Activated B cell treated with CpG ODN at 0.5 μM for 24 hours (primary cell): ENCODE measurements at regions of chr19 and their contacts with region 1.

Region 1: GRCh38 chr19:11203194-11204075 is 6.1 kb upstream of the KANK2 start:
- DNase-seq: peak; percentile 38
- ATAC-seq: peak; percentile 69
- H3K4me3 Mint-ChIP-seq: no peak overlapping the region
- H3K27ac Mint-ChIP-seq: no peak overlapping the region
- H3K4me1 Mint-ChIP-seq: peaks cover 14% of the 10 kb centered on the region
- H3K27me3 Mint-ChIP-seq: peaks cover 3% of the 10 kb centered on the region
- CTCF ChIP-seq: peak; percentile 52

Region 2: DNA sequence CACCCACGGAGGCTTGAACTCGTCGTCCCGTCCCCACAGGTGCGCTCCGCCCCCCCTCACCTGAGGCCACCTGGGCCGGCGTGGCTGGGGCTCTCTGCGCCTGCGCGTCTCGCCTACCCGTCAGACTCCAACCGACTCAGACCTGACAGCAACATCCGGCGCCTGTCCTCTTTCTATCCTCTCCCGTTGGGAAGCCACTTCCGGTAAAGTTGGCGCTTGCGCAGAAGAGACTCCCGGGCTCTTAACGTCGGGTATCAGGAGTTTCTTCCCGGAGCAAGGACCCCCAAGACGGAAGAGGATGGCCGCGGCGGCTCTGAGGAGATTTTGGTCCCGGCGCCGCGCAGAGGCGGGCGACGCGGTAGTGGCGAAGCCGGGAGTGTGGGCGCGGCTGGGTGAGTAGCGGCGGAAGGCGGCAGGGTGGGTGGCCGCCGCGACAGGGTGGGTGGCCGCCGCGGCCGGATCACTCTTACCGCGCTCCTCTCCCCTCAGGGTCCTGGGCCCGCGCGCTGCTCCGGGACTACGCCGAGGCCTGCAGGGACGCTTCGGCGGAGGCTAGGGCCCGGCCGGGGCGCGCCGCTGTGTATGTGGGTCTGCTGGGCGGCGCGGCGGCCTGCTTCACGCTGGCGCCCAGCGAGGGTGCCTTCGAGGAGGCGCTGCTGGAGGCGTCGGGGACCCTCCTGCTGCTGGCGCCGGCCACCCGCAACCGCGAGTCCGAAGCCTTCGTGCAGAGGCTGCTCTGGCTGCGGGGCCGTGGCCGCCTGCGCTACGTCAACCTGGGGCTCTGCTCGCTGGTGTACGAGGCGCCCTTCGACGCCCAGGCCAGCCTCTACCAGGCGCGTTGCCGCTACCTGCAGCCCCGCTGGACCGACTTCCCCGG is 274.7 kb before region 1 on chr19 and contains the starts of genes TIMM29 and YIPF2:
- CTCF ChIA-PET with region 1: no interaction called
- POLR2A ChIA-PET with region 1: interaction called, 15 read pairs
- intact Hi-C with region 1: no loop called
- DNase-seq: peak; percentile 80
- ATAC-seq: peak; percentile 85
- H3K4me3 Mint-ChIP-seq: peak within 1 kb of the TSS; percentile 92
- H3K27ac Mint-ChIP-seq: peak within 1 kb of the TSS; percentile 81
- H3K4me1 Mint-ChIP-seq: peaks cover 20% of the 10 kb centered on the region
- H3K27me3 Mint-ChIP-seq: no peaks in the 10 kb centered on the region
- CTCF ChIP-seq: no peak
- total RNA-seq, gene TIMM29: 16.6 and 19.5 TPM in 2 replicates
- total RNA-seq, gene YIPF2: 23.0 and 23.9 TPM in 2 replicates

Region 3: GRCh38 chr19:10946964-10947657 is 256.3 kb before region 1 on chr19:
- CTCF ChIA-PET with region 1: no interaction called
- POLR2A ChIA-PET with region 1: interaction called, 4 read pairs
- intact Hi-C with region 1: loop called (anchors 2 kb)
- DNase-seq: no peak
- ATAC-seq: no peak
- H3K4me3 Mint-ChIP-seq: no peak overlapping the region
- H3K27ac Mint-ChIP-seq: no peak overlapping the region
- H3K4me1 Mint-ChIP-seq: peaks cover 1% of the 10 kb centered on the region
- H3K27me3 Mint-ChIP-seq: no peaks in the 10 kb centered on the region
- CTCF ChIP-seq: no peak

Region 4: DNA sequence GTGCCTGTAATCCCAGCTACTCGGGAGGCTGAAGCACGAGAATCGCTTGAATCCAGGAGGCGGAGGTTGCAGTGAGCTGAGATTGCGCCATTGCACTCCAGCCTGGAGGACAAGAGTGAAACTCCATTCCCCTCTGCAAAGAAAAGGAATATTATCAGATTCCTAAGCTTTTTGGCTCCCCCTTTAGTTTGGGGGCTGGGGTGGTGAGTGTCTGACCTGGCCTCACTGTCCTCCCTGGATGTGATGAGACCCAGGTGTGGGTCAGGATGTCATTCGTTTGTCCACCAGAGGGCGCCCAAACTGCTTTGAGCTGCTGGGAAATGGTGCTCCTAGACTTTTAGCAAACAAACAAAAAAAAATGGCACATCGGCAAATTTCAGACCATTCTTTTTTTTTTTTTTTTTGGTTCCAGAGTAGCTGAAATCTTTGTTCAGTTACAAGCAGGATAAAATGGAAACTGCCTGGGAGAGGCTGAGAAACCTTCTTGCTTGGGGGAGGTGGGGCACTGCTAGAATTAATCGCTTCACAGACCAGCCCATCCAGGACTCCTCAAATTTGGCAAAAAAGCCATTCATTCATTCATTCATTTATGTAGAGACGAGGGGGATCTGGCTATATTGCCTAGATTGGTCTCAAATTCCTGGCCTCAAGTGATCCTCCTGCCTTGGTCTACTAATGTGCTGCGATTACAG is 77.3 kb before region 1 on chr19:
- CTCF ChIA-PET with region 1: interaction called, 11 read pairs
- POLR2A ChIA-PET with region 1: no interaction called
- intact Hi-C with region 1: loop called (anchors 1 kb)
- DNase-seq: peak; percentile 54
- ATAC-seq: peak; percentile 63
- H3K4me3 Mint-ChIP-seq: no peak overlapping the region
- H3K27ac Mint-ChIP-seq: no peak overlapping the region
- H3K4me1 Mint-ChIP-seq: peaks cover 7% of the 10 kb centered on the region
- H3K27me3 Mint-ChIP-seq: no peaks in the 10 kb centered on the region
- CTCF ChIP-seq: peak; percentile 56

Region 5: DNA sequence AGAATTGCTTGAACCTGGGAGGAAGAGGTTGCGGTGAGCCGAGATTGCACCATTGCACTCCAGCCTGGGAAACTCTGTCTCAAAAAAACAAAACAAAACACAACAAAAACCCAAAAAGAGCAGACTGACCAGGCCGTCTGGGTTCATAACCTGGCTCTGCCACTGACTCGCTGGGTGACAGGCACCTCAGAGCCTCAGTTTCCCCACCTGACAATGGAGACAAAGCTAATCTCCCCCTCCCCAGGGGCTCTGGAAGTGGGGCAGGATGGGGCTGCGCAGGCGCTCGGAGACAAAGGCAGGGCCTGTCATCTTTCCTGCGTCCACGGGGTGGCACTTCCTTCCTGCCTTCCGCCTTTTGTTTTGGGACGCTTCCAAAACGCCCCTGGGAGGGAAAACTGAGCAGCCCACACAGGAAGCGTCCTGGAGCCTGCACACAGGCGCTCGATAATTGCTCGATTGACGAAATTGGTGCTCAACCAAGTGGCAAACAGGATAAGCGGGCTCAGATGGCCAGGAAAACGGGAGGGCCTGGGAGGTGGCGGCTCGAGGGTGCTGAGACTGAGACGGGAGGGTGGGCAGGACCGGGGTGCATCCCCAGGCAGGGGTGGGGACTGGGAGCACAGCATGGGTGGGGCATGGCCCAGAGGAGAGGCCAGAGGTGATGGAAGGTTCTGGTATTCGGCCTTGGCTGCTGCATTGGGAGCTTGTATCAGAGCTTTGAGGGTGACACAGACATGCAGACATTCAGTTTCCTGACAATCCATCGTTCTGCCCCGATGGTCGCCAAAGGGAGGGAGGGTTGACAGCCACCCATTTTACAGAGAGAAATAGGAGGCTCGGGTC is 65.7 kb before region 1 on chr19:
- CTCF ChIA-PET with region 1: interaction called, 19 read pairs
- POLR2A ChIA-PET with region 1: no interaction called
- intact Hi-C with region 1: loop called (anchors 1 kb)
- DNase-seq: no peak
- ATAC-seq: peak; percentile 50
- H3K4me3 Mint-ChIP-seq: no peak overlapping the region
- H3K27ac Mint-ChIP-seq: no peak overlapping the region
- H3K4me1 Mint-ChIP-seq: peaks cover 8% of the 10 kb centered on the region
- H3K27me3 Mint-ChIP-seq: peaks cover 21% of the 10 kb centered on the region
- CTCF ChIP-seq: no peak

Region 6: GRCh38 chr19:13120817-13121216 is 1917.4 kb after region 1 on chr19:
- CTCF ChIA-PET with region 1: no interaction called
- POLR2A ChIA-PET with region 1: no interaction called
- intact Hi-C with region 1: no loop called
- DNase-seq: no peak
- ATAC-seq: no peak
- H3K4me3 Mint-ChIP-seq: peak overlapping the region; percentile 28
- H3K27ac Mint-ChIP-seq: no peak overlapping the region
- H3K4me1 Mint-ChIP-seq: peaks cover 61% of the 10 kb centered on the region
- H3K27me3 Mint-ChIP-seq: no peaks in the 10 kb centered on the region
- CTCF ChIP-seq: no peak